ENCODE measurements at regions of chr22 and their contacts with region 1.

Region 1: DNA sequence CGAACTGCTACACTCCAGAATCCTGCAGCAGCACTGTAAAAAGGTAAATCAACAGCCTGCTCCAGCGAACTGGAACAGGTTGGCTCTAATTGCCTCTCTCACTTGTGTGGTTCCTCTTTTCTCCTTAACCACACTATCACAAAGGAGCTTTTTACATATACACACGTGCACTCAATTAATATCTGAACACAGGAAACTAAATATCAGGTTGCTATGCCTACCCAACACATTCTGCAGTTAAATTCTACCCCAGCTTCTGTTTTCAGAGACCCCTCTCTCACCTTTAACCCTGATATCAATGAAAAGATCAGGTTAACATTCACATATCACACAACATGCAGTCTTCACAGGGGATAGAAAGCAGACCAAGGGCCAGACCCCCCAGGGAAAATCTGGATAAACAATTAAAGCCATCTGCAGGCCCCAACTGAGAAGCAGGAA is 11.0 kb downstream of the RBFOX2 start:
- DNase-seq: no peak
- ATAC-seq: peak; percentile 95
- H3K4me3 Mint-ChIP-seq: peak overlapping the region; percentile 26
- H3K27ac Mint-ChIP-seq: peak overlapping the region; percentile 46
- H3K4me1 Mint-ChIP-seq: peaks cover 24% of the 10 kb centered on the region
- H3K27me3 Mint-ChIP-seq: peaks cover 68% of the 10 kb centered on the region
- CTCF ChIP-seq: no peak

Region 2: GRCh38 chr22:35749808-35750207 is 267.9 kb before region 1 on chr22:
- CTCF ChIA-PET with region 1: no interaction called
- POLR2A ChIA-PET with region 1: no interaction called
- intact Hi-C with region 1: loop called (anchors 2 kb)
- DNase-seq: peak; percentile 42
- ATAC-seq: peak; percentile 95
- H3K4me3 Mint-ChIP-seq: peak overlapping the region; percentile 53
- H3K27ac Mint-ChIP-seq: peak overlapping the region; percentile 24
- H3K4me1 Mint-ChIP-seq: peaks cover 29% of the 10 kb centered on the region
- H3K27me3 Mint-ChIP-seq: peaks cover 62% of the 10 kb centered on the region
- CTCF ChIP-seq: no peak

Region 3: GRCh38 chr22:36055376-36056295 is 38.0 kb after region 1 on chr22:
- CTCF ChIA-PET with region 1: no interaction called
- POLR2A ChIA-PET with region 1: no interaction called
- intact Hi-C with region 1: no loop called
- DNase-seq: no peak
- ATAC-seq: no peak
- H3K4me3 Mint-ChIP-seq: no peak overlapping the region
- H3K27ac Mint-ChIP-seq: no peak overlapping the region
- H3K4me1 Mint-ChIP-seq: no peaks in the 10 kb centered on the region
- H3K27me3 Mint-ChIP-seq: peaks cover 16% of the 10 kb centered on the region
- CTCF ChIP-seq: no peak

Measured in activated B cell treated with CpG ODN at 0.5 μM for 24 hours (primary cell).